ENCODE measurements at regions of chr1 and their contacts with region 1.

Region 1: DNA sequence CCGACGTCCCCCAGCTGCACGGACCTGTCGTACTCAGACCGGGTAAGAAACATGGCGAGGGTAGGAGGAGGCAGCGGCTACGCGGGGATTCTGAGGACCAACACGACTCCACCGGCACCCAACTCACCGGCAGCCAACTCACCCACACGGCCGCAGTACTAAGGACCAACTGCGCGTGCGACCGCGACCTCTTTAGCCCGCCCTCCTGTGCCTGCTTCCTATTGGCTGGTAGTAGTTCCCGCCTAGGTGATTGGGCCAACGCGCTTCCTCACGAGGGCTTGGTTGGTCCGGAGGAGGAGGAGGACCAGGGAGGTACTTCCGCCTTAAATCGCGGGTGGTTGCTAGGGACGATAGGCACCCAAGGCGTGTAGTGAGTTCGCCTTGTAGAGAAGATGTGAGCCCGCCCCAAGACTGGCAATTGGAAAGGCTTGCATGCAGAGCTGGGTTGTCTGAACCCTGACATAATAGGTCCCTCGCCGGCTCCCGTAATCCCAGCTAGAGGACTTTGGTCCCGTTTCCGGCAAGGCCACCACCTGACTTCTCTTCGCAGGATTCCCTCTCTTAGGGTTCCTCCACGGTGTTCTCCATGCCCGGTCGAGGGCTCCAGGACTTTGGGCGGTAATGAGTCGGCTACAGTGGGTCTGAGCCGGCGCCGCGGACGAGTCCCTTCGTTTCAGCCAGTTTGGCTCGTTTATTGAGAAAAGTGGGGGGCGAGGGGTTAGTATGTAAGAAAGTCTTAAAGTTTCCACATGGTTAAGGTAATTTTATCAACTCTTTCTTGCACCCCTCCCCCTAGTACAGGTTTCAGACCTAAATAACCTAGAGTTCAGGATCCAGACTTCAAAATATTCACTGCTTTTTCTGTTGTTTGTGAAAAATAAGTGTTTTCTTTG is at the start of gene PSMA5:
- DNase-seq: peak; percentile 98
- H3K4me3 Mint-ChIP-seq: peak within 1 kb of the TSS; percentile 94
- H3K27ac Mint-ChIP-seq: peak within 1 kb of the TSS; percentile 97
- H3K4me1 Mint-ChIP-seq: peaks cover 27% of the 10 kb centered on the region
- H3K27me3 Mint-ChIP-seq: peaks cover 2% of the 10 kb centered on the region
- total RNA-seq, gene PSMA5: 262 and 270 TPM in 2 replicates

Region 2: GRCh38 chr1:109282952-109283747 is 143.4 kb before region 1 on chr1 and contains the start of gene PSRC1:
- intact Hi-C with region 1: loop called (anchors 1 kb)
- DNase-seq: peak; percentile 98
- H3K4me3 Mint-ChIP-seq: peak within 1 kb of the TSS; percentile 95
- H3K27ac Mint-ChIP-seq: peak within 1 kb of the TSS; percentile 95
- H3K4me1 Mint-ChIP-seq: peaks cover 19% of the 10 kb centered on the region
- H3K27me3 Mint-ChIP-seq: peaks cover 2% of the 10 kb centered on the region
- total RNA-seq, gene PSRC1: 4.5 and 5.0 TPM in 2 replicates

Region 3: GRCh38 chr1:110034451-110035235 is 608.1 kb after region 1 on chr1 and contains the start of gene STRIP1:
- intact Hi-C with region 1: loop called (anchors 1 kb)
- DNase-seq: peak; percentile 98
- H3K4me3 Mint-ChIP-seq: peak within 1 kb of the TSS; percentile 97
- H3K27ac Mint-ChIP-seq: peak within 1 kb of the TSS; percentile 86
- H3K4me1 Mint-ChIP-seq: peaks cover 46% of the 10 kb centered on the region
- H3K27me3 Mint-ChIP-seq: no peaks in the 10 kb centered on the region
- total RNA-seq, gene STRIP1: 41.0 and 43.8 TPM in 2 replicates